ENCODE measurements at regions of chr16 and their contacts with region 1.

Region 1: DNA sequence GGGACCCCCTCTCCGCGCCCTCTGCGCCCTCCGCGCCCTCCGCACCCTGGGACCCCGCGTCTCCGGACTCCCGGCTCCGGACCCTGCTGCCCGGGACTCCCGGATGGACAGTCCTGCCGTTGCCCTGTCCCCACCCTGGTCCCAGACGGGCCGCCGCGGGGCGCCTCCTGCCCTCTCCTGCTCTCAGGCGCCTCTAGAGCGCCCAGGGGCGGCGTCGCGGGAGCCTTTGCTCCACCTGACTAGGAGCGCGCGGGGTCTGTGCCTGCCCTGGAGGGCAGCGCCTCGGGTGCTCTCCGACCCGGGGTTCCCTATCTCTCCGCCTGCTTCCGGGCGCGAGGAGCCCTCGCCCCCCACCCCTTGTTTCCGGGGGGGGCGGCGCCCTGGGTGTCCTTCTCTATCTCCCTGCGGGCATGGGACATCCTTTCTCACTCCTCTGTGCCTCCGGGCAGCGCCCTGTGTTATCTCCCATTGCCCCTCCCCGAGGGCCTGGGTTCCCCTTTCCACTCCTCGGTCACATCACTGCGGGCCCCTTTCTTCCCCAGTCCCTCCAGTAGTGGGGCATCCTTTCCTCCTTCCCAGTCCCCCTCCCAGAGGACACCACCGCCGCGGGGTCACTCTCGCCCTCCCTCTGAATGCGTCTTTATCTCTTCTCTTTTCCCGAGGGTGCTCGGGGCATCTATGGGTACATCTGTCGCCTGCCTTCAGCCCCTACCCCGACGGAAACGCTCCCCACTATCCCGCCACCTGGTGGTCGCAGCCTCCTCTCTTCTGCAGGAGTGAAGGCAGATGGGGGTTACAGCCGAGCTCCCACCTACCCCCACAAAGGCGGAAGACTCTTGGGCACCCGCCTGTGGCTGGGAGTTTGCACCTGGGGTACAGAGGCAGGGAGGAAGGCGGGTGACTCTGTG is 875 bp downstream of the PRKCB start:
- DNase-seq: peak; percentile 76
- ATAC-seq: peak; percentile 54
- H3K4me3 Mint-ChIP-seq: peak overlapping the region; percentile 98
- H3K27ac Mint-ChIP-seq: peak overlapping the region; percentile 90
- H3K4me1 Mint-ChIP-seq: peaks cover 62% of the 10 kb centered on the region
- H3K27me3 Mint-ChIP-seq: no peaks in the 10 kb centered on the region

Region 2: GRCh38 chr16:23863511-23864422 is 27.1 kb after region 1 on chr16:
- CTCF ChIA-PET with region 1: interaction called, 12 read pairs
- POLR2A ChIA-PET with region 1: interaction called, 3 read pairs
- DNase-seq: peak; percentile 58
- ATAC-seq: peak; percentile 87
- H3K4me3 Mint-ChIP-seq: peak overlapping the region; percentile 88
- H3K27ac Mint-ChIP-seq: peak overlapping the region; percentile 93
- H3K4me1 Mint-ChIP-seq: peaks cover 81% of the 10 kb centered on the region
- H3K27me3 Mint-ChIP-seq: no peaks in the 10 kb centered on the region

Measured in activated CD8-positive, alpha-beta T cell treated with anti-CD3 and anti-CD28 coated beads, Interleukin-2, amount 10 ng/mL, durations not matched to agents 7 days and 5 days (primary cell).